ENCODE measurements at regions of chr10 and their contacts with region 1.

Region 1: DNA sequence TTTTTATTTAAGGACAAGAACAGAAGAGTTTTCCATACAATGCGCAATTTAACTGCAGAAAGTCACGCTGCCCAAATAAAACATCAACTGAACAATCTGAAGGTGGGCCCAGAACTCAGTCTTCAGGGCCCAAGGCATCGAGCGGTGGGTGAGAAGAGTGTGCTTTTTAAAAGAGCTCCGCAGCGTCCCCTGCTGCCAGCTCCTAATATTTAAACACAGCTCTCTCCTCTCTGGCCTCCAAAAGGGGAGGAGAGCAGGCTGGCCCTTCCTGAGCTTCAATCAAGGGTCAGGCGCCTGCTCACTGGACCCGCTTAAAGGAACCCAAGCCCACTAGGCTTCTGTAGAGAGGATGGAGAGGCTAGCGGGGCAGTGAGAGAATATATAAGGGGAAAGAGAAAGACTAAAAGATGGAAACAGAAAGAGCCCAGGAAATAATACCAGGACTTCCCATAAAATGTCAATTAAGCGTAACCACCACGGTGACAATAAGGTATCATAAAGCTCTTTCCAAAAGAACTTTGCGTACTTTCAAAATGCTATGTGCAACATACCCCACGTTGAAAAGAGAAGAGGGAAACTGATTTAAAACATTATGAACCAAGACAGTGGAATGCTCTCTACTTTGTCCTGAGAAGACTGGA is 2.8 kb downstream of the FAM53B start:
- DNase-seq: peak; percentile 92
- H3K4me3 Mint-ChIP-seq: peak overlapping the region; percentile 84
- H3K27ac Mint-ChIP-seq: peak overlapping the region; percentile 78
- H3K4me1 Mint-ChIP-seq: peaks cover 53% of the 10 kb centered on the region
- H3K27me3 Mint-ChIP-seq: peaks cover 10% of the 10 kb centered on the region

Region 2: GRCh38 chr10:124539935-124540641 is 201.3 kb before region 1 on chr10:
- intact Hi-C with region 1: loop called (anchors 1 kb)
- DNase-seq: peak; percentile 90
- H3K4me3 Mint-ChIP-seq: no peak overlapping the region
- H3K27ac Mint-ChIP-seq: no peak overlapping the region
- H3K4me1 Mint-ChIP-seq: no peaks in the 10 kb centered on the region
- H3K27me3 Mint-ChIP-seq: no peaks in the 10 kb centered on the region

Region 3: GRCh38 chr10:124621637-124622036 is 119.8 kb before region 1 on chr10:
- intact Hi-C with region 1: no loop called
- DNase-seq: no peak
- H3K4me3 Mint-ChIP-seq: no peak overlapping the region
- H3K27ac Mint-ChIP-seq: no peak overlapping the region
- H3K4me1 Mint-ChIP-seq: peaks cover 10% of the 10 kb centered on the region
- H3K27me3 Mint-ChIP-seq: peaks cover 2% of the 10 kb centered on the region

Region 4: GRCh38 chr10:124647421-124648130 is 93.8 kb before region 1 on chr10:
- intact Hi-C with region 1: loop called (anchors 1 kb)
- DNase-seq: peak; percentile 92
- H3K4me3 Mint-ChIP-seq: peak overlapping the region; percentile 81
- H3K27ac Mint-ChIP-seq: peak overlapping the region; percentile 94
- H3K4me1 Mint-ChIP-seq: peaks cover 64% of the 10 kb centered on the region
- H3K27me3 Mint-ChIP-seq: no peaks in the 10 kb centered on the region

Region 5: DNA sequence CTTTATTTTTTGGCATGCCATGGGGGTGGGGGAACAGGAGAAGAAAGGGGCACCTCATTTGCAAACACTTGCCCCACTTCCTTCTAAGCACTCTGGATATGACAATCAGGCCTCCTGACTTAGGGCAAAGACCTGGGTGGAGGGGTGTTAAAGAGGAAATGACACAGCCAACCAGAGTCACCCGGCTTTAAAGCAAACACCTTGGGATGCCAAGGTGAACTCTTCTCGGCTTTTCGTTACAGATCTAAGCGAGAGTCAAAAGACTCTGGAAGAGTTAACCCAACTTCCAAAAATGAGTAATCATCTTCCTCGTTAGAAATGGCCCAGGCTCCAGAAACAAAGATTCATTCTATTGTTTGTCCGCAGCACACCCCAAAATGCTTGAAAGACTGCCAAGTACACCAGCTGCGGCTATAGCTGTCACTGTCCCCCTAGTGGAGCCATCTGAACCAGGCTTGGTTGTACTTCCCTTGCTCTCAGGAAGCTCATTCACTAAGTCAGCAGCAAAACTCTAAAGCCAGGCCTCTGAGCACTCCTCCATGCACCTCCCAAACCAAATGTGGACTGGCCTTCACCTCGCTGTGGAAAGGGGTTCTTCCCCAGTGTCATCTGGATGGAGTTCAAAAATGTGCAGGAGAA is 22.1 kb before region 1 on chr10:
- intact Hi-C with region 1: loop called (anchors 1 kb)
- DNase-seq: peak; percentile 88
- H3K4me3 Mint-ChIP-seq: peak overlapping the region; percentile 43
- H3K27ac Mint-ChIP-seq: peak overlapping the region; percentile 78
- H3K4me1 Mint-ChIP-seq: peaks cover 78% of the 10 kb centered on the region
- H3K27me3 Mint-ChIP-seq: no peaks in the 10 kb centered on the region

Region 6: GRCh38 chr10:124802313-124802675 is 60.9 kb after region 1 on chr10:
- intact Hi-C with region 1: no loop called
- DNase-seq: peak; percentile 74
- H3K4me3 Mint-ChIP-seq: peak overlapping the region; percentile 95
- H3K27ac Mint-ChIP-seq: peak overlapping the region; percentile 89
- H3K4me1 Mint-ChIP-seq: peaks cover 14% of the 10 kb centered on the region
- H3K27me3 Mint-ChIP-seq: peaks cover 8% of the 10 kb centered on the region

Region 7: GRCh38 chr10:124916585-124917427 is 175.4 kb after region 1 on chr10:
- intact Hi-C with region 1: loop called (anchors 2 kb)
- DNase-seq: peak; percentile 99
- H3K4me3 Mint-ChIP-seq: peak overlapping the region; percentile 94
- H3K27ac Mint-ChIP-seq: peak overlapping the region; percentile 95
- H3K4me1 Mint-ChIP-seq: peaks cover 29% of the 10 kb centered on the region
- H3K27me3 Mint-ChIP-seq: peaks cover 8% of the 10 kb centered on the region

Measured in activated CD4-positive, alpha-beta T cell treated with anti-CD3 and anti-CD28 coated beads, Interleukin-2, amount 10 ng/mL, durations not matched to agents 24 days and 14 days (primary cell).